Astrocyte of the cerebellum (primary cell): ENCODE measurements at regions of chr17 and their contacts with region 1.

Region 1: DNA sequence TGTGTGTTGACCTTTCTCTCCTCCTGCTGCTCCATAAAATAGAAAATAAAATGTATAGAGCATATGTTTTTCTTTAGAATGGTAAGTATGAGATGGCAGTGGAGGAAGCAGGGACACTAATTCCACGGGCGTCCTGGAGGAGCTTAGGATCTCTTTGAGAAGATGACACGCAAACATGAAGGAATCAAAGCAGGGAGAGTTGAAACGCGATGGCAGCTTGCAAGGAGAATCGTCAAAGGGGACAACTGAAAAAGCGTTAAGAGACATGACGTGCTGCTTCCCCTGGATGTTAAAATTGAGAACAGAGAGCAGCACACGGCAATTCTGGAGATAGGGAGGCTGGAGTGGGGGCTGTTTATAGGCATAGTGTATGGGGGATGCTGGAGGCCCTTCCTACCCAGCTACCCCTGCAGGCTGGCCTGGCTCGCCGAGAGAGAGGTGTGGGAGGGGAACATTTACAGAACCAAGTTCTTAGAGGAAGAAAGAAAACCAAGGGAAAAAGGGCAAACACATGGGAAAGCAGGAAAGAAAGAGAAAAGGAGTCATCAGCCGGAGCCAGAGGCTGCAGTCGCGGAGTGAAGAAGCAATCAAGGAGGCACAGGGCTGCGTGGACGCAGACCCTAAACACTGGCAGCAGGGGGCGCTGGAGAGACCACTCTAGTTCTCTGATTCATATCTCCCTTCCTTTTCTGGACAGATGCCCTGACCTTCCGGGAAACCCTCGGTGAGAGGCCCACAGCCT is 55.8 kb downstream of the MYH13 start:
- DNase-seq: no peak
- H3K4me3 ChIP-seq: no peak overlapping the region
- CTCF ChIP-seq: peak; percentile 44

Region 2: DNA sequence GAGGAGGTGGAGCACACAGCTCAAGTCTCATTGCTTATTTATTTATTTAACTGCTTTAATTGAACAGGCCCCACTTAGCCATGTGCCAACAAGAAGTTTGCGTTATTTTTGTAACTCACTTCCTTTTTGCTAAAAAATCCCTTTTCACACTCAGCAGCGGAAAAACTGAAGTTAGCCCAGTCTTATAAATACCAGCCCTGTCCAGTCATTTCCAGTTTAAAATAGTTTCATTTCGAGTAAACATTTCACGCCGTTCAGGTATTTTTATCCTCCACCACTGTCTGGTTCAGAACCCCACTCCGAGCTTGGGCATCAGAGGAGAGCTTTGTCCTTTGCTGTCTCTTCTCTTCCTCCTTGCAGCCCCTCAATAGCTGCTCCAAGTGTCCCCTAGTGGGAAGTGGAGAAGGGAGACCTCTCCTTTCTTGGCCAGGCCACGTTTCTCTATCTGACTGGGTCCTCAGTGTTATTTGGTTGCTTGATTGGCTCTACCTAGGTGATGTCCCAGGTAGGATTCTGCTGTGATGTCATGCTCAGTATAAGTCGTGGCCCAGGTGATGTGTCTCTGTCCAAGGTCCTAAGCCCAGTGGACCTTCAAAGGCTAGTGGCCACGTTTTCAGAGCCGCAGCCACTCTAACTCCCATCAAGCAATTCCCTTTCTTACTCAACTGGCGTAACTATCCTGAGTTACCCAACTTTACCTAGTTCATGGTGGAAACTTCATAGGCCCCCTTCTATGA is 65.6 kb before region 1 on chr17:
- in situ Hi-C with region 1: no loop called
- DNase-seq: no peak
- H3K4me3 ChIP-seq: no peak overlapping the region
- CTCF ChIP-seq: no peak

Region 3: GRCh38 chr17:10265100-10265810 is 51.7 kb before region 1 on chr17:
- in situ Hi-C with region 1: no loop called
- DNase-seq: no peak
- H3K4me3 ChIP-seq: no peak overlapping the region
- CTCF ChIP-seq: no peak

Region 4: DNA sequence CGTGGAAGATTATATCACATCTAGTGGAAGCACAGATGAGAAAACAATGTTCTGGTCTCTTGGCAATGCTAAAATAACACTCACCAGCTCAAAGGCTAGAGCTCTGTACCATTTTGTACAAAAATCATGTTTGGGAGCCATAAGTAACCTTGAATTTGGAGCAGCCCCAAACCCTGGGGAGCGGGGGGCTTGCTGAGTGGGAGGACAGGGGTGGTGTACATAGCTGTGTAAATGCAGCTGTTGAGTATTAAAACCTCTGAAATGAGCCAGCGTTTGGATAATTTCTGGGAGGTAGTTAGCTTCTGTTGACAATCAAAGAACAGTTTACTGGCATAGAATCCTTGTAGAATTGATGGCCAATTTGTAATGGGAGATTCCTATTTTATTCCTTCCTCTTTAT is 100.5 kb after region 1 on chr17:
- in situ Hi-C with region 1: loop called (anchors 25 kb)
- DNase-seq: no peak
- H3K4me3 ChIP-seq: no peak overlapping the region
- CTCF ChIP-seq: no peak

Region 5: GRCh38 chr17:10618202-10618635 is 301.2 kb after region 1 on chr17:
- in situ Hi-C with region 1: loop called (anchors 25 kb)
- DNase-seq: peak; percentile 44
- H3K4me3 ChIP-seq: no peak overlapping the region
- CTCF ChIP-seq: peak; percentile 96